Pancreas (tissue), 10 donors: ENCODE measurements at regions of chr9 and their contacts with region 1.

Region 1: DNA sequence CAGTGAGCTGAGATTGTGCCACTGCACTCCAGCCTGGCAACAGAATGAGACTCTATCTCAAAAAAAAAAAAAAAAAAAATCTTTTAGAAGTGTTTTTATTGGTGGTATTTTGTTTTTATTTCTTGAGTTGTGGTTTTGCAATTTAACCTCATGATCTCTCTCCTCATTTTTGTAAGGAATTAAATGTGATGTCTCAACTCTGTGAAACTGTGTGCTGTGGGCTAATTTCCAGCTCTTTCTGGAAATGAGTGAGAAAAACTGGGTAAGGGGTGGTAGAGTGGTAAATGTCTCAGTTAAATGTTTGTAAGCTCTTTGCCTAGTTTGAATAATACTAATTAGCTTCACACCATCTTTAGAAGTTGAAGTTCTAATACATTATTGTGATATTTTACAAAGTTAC is 29.0 kb downstream of the ACO1 start:
- DNase-seq: no peak
- ATAC-seq: no peak
- H3K4me3 ChIP-seq: no peak overlapping the region
- H3K27ac ChIP-seq: no peak overlapping the region
- H3K4me1 ChIP-seq: no peaks in the 10 kb centered on the region
- H3K27me3 ChIP-seq: no peaks in the 10 kb centered on the region
- CTCF ChIP-seq: no peak

Region 2: GRCh38 chr9:32161720-32162119 is 251.7 kb before region 1 on chr9:
- intact Hi-C with region 1: no loop called
- DNase-seq: no peak
- ATAC-seq: no peak
- H3K4me3 ChIP-seq: no peak overlapping the region
- H3K27ac ChIP-seq: no peak overlapping the region
- H3K4me1 ChIP-seq: no peaks in the 10 kb centered on the region
- H3K27me3 ChIP-seq: no peaks in the 10 kb centered on the region
- CTCF ChIP-seq: no peak

Region 3: GRCh38 chr9:32502464-32502863 is 89.0 kb after region 1 on chr9:
- intact Hi-C with region 1: loop called in 1 of 3 experiments (anchors 10 kb)
- DNase-seq: no peak
- ATAC-seq: no peak
- H3K4me3 ChIP-seq: no peak overlapping the region
- H3K27ac ChIP-seq: no peak overlapping the region
- H3K4me1 ChIP-seq: peaks cover 0 to under 1% (median 0%) of the 10 kb centered on the region in 3 donors
- H3K27me3 ChIP-seq: no peaks in the 10 kb centered on the region
- CTCF ChIP-seq: no peak